ENCODE measurements at regions of chr21 and their contacts with region 1.

Region 1: DNA sequence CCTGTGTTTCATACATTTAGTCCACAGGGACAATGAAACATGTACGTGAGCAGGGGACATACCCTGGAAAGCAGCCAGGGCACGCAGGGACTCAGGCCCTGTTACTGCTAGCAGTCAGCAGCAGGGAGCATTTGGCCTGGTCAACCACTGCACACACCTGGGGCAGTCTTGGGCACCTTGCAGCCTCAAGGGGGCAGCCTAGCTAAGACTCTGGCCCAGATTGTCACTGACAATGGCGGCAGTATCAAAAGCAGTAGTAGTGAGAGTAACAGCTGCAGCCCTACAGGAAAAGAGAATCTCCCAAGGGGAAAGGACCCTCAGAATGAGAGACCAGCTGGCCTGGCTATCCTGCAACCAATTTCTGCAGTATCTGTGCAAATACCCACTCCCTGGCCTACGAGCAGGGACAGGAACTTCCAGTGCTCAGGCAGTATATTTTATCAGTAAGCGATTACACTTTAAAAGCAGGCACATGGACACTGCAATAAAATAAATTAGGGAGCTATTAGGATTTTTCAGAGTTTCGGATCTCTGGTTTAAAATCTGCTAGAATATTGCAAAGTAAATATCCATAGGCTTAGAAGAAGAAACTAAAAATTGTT is 475.6 kb downstream of the LTN1 start:
- DNase-seq: peak; percentile 32
- H3K4me3 ChIP-seq: no peak overlapping the region
- H3K27ac ChIP-seq: no peak overlapping the region
- H3K4me1 ChIP-seq: peaks cover 28% of the 10 kb centered on the region
- H3K27me3 ChIP-seq: no peaks in the 10 kb centered on the region
- CTCF ChIP-seq: peak; percentile 57 to 63
- POLR2A ChIP-seq: no peak

Region 2: DNA sequence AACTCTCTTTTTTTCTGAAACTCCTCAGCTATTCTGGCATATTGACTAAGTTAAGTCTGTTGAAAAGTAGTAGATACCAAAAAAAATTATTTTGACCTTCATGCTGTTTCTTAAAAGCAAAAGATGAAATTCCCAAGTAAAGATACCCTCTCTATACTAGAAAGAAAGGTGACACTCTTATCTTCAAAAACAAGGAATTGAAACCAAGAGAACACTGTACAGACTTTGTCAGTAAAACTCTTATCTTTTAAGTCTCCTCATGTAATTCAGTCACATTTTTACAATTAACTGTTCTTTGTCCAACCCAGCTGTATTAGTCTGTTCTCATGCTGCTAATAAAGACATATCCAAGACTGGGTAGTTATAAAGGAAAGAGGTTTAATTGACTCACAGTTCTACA is 20.6 kb before region 1 on chr21:
- CTCF ChIA-PET with region 1: no interaction called
- POLR2A ChIA-PET with region 1: no interaction called
- dilution Hi-C with region 1: no loop called
- intact Hi-C with region 1: no loop called
- DNase-seq: no peak
- H3K4me3 ChIP-seq: no peak overlapping the region
- H3K27ac ChIP-seq: no peak overlapping the region
- H3K4me1 ChIP-seq: no peaks in the 10 kb centered on the region
- H3K27me3 ChIP-seq: no peaks in the 10 kb centered on the region
- CTCF ChIP-seq: no peak
- POLR2A ChIP-seq: no peak

Region 3: DNA sequence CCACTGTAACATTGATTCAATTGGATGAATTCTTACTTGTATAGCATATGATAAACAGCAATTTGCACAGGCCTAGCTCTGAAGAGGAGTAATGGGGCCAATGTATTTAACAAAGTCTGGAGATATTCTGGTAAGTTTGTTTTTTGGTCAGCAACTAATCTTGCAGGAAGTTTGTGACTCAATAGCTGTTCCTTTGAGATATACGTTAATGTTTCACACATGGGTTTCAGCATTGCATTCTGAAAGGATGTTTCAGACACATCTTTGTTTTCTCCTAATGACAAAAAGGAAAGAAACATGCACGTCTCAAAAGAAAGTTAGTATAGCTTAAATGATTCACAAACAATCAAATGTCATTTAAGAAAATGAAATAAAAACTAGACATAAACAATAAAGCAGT is 426.5 kb after region 1 on chr21:
- CTCF ChIA-PET with region 1: no interaction called
- POLR2A ChIA-PET with region 1: no interaction called
- dilution Hi-C with region 1: no loop called
- intact Hi-C with region 1: loop called (anchors 5 kb)
- DNase-seq: peak; percentile 63
- H3K4me3 ChIP-seq: no peak overlapping the region
- H3K27ac ChIP-seq: peak overlapping the region; percentile 59
- H3K4me1 ChIP-seq: peaks cover 37% of the 10 kb centered on the region
- H3K27me3 ChIP-seq: no peaks in the 10 kb centered on the region
- CTCF ChIP-seq: no peak
- POLR2A ChIP-seq: no peak